Caco-2 (cell line): ENCODE measurements at regions of chr1 and their contacts with region 1.

Region 1: GRCh38 chr1:189693140-189693539 is 784.5 kb downstream of the BRINP3 start:
- DNase-seq: peak in 1 of 2 experiments; percentile 7
- H3K4me3 ChIP-seq: no peak overlapping the region
- H3K4me3 Mint-ChIP-seq: no peak overlapping the region
- H3K27ac Mint-ChIP-seq: no peak overlapping the region
- H3K4me1 ChIP-seq: no peaks in the 10 kb centered on the region
- H3K4me1 Mint-ChIP-seq: no peaks in the 10 kb centered on the region
- H3K27me3 ChIP-seq: no peaks in the 10 kb centered on the region
- H3K27me3 Mint-ChIP-seq: no peaks in the 10 kb centered on the region
- CTCF ChIP-seq: no peak

Region 2: DNA sequence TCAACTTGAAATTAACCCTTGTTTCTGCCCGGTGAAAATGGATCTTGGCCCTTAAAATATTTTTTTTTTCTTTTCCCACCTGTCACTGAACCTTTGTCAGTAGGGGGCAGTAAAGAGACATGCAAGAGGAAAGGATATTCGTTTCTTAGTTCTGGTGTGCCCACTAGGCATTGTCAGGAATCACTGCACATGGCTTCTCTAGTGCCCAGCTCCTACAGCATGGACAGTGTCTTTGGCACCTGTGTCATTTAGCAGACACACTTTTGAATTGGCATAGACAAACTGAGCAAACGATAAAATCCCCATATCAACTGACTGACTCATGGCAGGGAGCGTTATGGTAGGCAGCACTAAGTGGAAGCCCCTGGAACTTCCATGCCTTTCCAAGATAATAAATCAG is 263.5 kb before region 1 on chr1:
- CTCF ChIA-PET with region 1: interaction called, 4 read pairs
- POLR2A ChIA-PET with region 1: no interaction called
- intact Hi-C with region 1: loop called (anchors 1 kb)
- DNase-seq: peak in 1 of 2 experiments; percentile 56
- H3K4me3 ChIP-seq: no peak overlapping the region
- H3K4me3 Mint-ChIP-seq: no peak overlapping the region
- H3K27ac Mint-ChIP-seq: no peak overlapping the region
- H3K4me1 ChIP-seq: no peaks in the 10 kb centered on the region
- H3K4me1 Mint-ChIP-seq: no peaks in the 10 kb centered on the region
- H3K27me3 ChIP-seq: no peaks in the 10 kb centered on the region
- H3K27me3 Mint-ChIP-seq: peaks cover under 1% of the 10 kb centered on the region
- CTCF ChIP-seq: peak; percentile 62

Region 3: GRCh38 chr1:189619682-189620332 is 73.3 kb before region 1 on chr1:
- CTCF ChIA-PET with region 1: no interaction called
- POLR2A ChIA-PET with region 1: no interaction called
- intact Hi-C with region 1: no loop called
- DNase-seq: no peak
- H3K4me3 ChIP-seq: no peak overlapping the region
- H3K4me3 Mint-ChIP-seq: no peak overlapping the region
- H3K27ac Mint-ChIP-seq: no peak overlapping the region
- H3K4me1 ChIP-seq: no peaks in the 10 kb centered on the region
- H3K4me1 Mint-ChIP-seq: no peaks in the 10 kb centered on the region
- H3K27me3 ChIP-seq: no peaks in the 10 kb centered on the region
- H3K27me3 Mint-ChIP-seq: no peaks in the 10 kb centered on the region
- CTCF ChIP-seq: no peak

Region 4: GRCh38 chr1:189790335-189790734 is 97.2 kb after region 1 on chr1:
- CTCF ChIA-PET with region 1: no interaction called
- POLR2A ChIA-PET with region 1: no interaction called
- intact Hi-C with region 1: no loop called
- DNase-seq: no peak
- H3K4me3 ChIP-seq: no peak overlapping the region
- H3K4me3 Mint-ChIP-seq: no peak overlapping the region
- H3K27ac Mint-ChIP-seq: no peak overlapping the region
- H3K4me1 ChIP-seq: no peaks in the 10 kb centered on the region
- H3K4me1 Mint-ChIP-seq: no peaks in the 10 kb centered on the region
- H3K27me3 ChIP-seq: no peaks in the 10 kb centered on the region
- H3K27me3 Mint-ChIP-seq: no peaks in the 10 kb centered on the region
- CTCF ChIP-seq: no peak